BJ (cell line): ENCODE measurements at regions of chr5 and their contacts with region 1.

Region 1: DNA sequence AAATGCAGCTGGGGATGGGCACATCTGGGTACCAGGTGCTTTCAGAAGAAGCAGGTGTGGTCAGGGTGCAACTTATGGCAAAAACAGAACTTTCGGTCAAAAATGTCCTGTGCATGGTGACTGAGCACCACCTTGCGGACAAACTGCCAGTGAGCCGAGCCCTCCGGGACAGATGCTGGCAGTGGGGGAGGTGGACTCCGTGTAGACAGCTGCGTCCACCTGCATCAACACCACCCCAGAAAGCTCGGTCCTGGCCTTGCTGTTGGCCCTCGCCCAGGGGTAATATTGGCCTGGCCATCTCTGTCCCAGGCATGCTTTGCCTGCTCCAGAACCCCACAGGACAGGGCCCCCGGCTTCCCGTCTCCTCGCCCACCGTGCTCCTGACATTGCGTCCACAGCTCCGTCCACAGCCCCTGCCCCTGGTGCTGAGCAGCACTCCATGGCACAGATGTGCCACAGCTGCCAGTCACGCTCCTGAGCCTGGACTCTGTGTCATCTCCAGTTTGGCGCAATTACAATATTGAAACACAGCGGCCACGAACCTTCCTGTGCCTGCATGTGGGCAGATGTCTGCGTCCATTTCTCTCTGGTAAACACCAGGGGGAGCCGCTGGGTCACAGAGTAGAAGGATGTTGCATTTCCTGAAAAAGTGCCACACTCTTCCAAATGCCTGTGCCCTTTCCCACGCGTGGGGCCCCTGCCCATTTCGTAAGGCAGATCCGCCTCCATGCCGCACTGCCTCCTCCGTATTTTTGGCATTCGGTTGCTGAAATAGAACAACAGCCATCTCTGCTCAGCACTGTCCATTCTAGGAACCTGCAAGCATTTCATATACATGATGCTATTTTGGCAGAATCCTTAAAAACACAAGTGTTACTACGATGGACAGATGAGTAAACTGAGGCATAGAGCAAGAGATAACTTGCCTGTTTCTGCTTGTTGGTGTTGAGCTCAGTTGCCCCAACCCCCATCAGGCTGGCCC is 33.4 kb upstream of the SLC6A19 start:
- DNase-seq: peak; percentile 9
- H3K4me3 ChIP-seq: no peak overlapping the region
- H3K27me3 ChIP-seq: no peaks in the 10 kb centered on the region
- CTCF ChIP-seq: peak; percentile 83

Region 2: GRCh38 chr5:932628-933250 is 235.3 kb before region 1 on chr5:
- CTCF ChIA-PET with region 1: interaction called, 151 read pairs
- POLR2A ChIA-PET with region 1: no interaction called
- DNase-seq: no peak
- H3K4me3 ChIP-seq: no peak overlapping the region
- H3K27me3 ChIP-seq: peaks cover 17% of the 10 kb centered on the region
- CTCF ChIP-seq: no peak

Region 3: GRCh38 chr5:945691-946551 is 222.1 kb before region 1 on chr5:
- CTCF ChIA-PET with region 1: interaction called, 12 read pairs
- POLR2A ChIA-PET with region 1: no interaction called
- DNase-seq: no peak
- H3K4me3 ChIP-seq: no peak overlapping the region
- H3K27me3 ChIP-seq: peaks cover 48% of the 10 kb centered on the region
- CTCF ChIP-seq: no peak

Region 4: DNA sequence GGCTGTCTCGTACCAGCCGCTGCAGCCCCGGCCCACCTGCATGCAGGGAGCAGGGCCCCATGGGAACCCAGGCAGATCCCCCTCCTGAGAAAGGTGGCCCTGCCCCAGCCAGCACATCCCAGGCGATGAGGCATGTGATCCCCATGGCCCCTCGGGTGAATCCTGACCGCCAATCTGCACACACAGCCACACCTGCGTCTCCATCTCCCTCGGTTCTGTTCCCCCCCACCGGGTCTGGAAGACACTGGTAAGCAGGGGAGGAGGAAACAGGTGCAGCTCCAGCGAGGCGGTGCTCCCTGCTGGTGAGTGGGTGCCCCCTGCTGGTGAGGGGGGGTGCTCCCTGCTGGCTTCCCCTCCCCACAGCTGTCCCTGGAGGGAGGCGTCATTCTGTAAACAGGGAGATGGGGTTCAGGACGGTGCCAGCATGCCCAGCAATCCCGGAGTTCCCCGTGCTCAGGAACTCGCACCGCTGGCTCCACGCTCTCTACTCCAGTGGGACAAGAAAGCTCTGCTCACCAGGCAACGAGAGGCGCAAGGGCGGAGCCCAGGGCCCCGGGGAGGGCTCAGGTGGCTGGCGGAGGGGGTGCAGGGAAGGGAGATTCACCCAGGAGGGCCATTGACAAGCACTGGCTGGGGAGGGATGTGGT is 27.7 kb before region 1 on chr5:
- CTCF ChIA-PET with region 1: interaction called, 27 read pairs
- POLR2A ChIA-PET with region 1: no interaction called
- DNase-seq: no peak
- H3K4me3 ChIP-seq: no peak overlapping the region
- H3K27me3 ChIP-seq: no peaks in the 10 kb centered on the region; the same call in 1 of the 2 replicates
- CTCF ChIP-seq: peak; percentile 83

Region 5: DNA sequence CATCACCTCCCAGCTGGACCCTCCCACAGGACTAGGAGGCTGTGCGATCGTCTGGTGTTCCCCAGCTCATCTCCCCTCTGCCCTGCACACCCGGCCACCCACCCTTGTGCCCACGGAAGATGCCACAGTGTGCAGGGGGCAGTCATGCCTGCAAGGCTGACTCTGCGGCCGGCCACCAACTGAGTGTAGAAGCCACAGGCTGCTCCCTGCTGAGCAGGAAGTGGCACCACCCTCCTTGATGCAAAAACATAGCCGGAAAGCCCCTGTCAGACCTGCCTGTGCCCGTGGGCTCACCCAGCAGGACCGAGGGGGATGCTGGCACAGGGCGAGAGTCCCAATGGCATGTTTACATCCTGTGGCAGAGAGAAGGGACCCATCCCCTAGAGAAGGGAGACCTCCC is 15.9 kb before region 1 on chr5:
- CTCF ChIA-PET with region 1: interaction called, 10 read pairs
- POLR2A ChIA-PET with region 1: no interaction called
- DNase-seq: no peak
- H3K4me3 ChIP-seq: no peak overlapping the region
- H3K27me3 ChIP-seq: peaks cover 28% of the 10 kb centered on the region
- CTCF ChIP-seq: no peak

Region 6: GRCh38 chr5:1182633-1183423 is 14.8 kb after region 1 on chr5:
- CTCF ChIA-PET with region 1: interaction called, 12 read pairs
- POLR2A ChIA-PET with region 1: no interaction called
- DNase-seq: no peak
- H3K4me3 ChIP-seq: no peak overlapping the region
- H3K27me3 ChIP-seq: no peaks in the 10 kb centered on the region; the same call in 1 of the 2 replicates
- CTCF ChIP-seq: no peak

Region 7: DNA sequence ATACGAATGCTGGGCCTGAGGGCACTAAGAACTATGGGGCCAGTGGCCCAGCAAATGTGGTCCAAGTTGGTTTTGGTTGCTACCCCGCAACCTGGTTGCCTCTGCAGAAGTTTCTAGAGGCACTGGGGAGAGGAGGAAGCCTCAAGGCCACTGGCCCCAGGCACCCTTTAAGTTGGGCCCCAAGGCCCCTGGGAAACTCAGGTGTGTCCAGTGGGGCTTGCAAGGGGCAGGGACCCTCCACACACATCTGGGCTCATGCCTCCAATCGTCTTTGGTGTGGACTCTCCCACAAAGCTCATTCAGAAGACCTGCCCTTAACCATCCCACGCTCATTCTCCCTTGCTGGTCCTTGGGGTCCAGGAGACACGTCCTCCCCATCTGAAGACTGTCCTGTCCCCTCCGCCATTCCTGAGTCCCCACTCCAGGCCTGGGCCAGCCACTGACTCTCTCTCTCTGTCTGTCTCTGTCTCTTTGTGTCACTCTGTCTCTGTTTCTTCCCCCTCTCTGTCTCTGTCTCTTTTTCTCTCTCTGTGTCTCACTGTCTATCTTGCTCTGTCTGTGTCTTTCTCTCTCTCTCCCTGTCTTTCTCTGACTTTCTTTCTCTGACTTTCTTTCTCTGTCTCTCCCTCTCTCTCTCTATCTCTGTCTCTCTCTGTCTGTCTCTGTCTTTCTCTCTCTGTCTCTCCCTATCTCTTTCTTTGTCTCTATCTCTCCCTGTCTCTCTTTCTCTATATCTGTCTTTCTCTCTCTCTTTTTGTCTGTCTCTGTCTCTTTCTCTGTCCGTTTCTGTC is 30.1 kb after region 1 on chr5:
- CTCF ChIA-PET with region 1: no interaction called
- POLR2A ChIA-PET with region 1: no interaction called
- DNase-seq: no peak
- H3K4me3 ChIP-seq: no peak overlapping the region
- H3K27me3 ChIP-seq: peaks cover 2% of the 10 kb centered on the region
- CTCF ChIP-seq: no peak

Region 8: GRCh38 chr5:1471997-1472963 is 304.3 kb after region 1 on chr5:
- CTCF ChIA-PET with region 1: no interaction called
- POLR2A ChIA-PET with region 1: no interaction called
- DNase-seq: no peak
- H3K4me3 ChIP-seq: no peak overlapping the region
- H3K27me3 ChIP-seq: no peaks in the 10 kb centered on the region
- CTCF ChIP-seq: no peak